Activated CD8-positive, alpha-beta T cell treated with anti-CD3 and anti-CD28 coated beads, Interleukin-2, amount 10 ng/mL, durations not matched to agents 7 days and 5 days (primary cell): ENCODE measurements at regions of chr6 and their contacts with region 1.

Region 1: GRCh38 chr6:42104095-42104806 is 38.2 kb downstream of the C6orf132 start:
- DNase-seq: peak; percentile 82
- ATAC-seq: peak; percentile 94
- H3K4me3 Mint-ChIP-seq: peak overlapping the region; percentile 65
- H3K27ac Mint-ChIP-seq: peak overlapping the region; percentile 74
- H3K4me1 Mint-ChIP-seq: peaks cover 30% of the 10 kb centered on the region
- H3K27me3 Mint-ChIP-seq: peaks cover 2% of the 10 kb centered on the region

Region 2: DNA sequence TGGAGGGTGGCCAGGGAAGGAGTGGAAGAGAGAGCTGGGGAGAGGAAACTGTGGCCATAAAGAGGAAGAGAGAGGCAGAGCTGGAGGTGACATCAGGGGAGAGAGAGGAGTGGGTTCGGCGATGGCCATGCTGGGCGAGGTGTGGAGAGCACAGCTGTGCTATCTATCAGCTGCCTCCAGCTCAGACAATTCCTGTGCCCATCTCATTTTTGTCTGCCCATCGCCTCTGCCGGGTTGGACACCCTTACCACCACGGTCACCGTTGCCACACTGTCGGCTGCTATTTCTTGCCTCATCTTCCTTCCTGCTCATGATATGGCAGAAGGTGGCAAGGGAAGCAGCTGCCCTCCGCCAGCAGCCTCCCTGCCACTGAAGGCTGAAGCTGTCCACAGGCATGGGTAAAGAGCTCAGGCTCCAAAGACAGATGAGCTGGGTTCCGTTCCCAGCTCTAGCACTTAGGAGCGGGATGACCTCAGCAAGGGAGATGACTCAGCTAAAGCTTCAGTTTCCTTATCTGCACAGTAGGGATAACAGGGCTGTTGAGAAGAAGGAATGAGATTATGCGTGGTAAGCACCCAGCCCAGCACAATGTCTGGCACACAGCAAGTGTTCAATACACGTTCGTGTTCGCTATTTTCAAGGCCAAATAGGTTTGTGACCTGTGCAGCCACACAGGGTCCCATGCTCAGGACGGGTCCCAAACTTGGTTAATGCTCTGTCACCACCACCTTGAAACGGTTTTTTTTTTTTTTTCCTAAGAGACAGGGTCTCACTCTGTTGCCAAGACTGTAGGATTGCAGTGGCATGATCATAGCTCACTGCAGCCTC is 75.8 kb before region 1 on chr6:
- CTCF ChIA-PET with region 1: no interaction called
- POLR2A ChIA-PET with region 1: no interaction called
- DNase-seq: no peak
- ATAC-seq: peak; percentile 29
- H3K4me3 Mint-ChIP-seq: peak overlapping the region; percentile 63
- H3K27ac Mint-ChIP-seq: peak overlapping the region; percentile 97
- H3K4me1 Mint-ChIP-seq: peaks cover 90% of the 10 kb centered on the region
- H3K27me3 Mint-ChIP-seq: no peaks in the 10 kb centered on the region

Region 3: DNA sequence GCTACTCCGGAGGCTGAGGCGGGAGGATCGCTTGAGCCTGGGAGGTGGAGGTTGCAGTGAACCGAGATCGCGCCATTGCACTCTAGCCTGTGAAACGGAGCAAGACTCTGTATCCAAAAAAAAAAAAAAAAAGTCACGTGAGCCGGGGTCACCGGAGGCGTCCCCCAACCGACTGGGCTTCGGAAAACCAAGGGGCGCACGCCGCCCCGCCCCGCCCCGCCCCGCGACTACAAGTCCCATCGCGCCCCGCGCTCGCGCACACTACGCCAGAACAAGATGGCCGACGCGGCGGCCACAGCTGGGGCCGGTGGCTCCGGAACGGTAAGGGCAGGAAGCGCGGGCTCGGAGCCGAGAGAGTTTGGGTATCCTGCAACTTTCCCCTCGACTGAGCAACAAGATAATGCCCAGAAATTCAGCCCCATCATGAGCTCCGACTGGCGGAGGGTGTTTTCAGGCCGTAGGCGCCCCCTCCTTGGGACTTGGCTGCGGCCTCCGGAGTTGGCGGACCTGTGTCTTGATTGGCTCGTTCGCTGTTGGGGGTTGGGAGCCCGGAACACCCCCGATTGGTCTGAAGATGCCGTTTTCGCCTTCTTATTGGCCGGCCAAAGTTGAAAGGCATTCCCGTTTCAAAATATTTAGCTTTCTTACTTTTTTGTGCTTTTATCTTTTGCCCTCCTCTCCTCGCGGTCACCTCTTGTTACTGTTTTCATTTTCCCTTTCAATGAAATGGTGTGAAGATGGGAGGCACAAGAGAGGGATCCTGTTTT is 53.8 kb before region 1 on chr6 and contains the start of gene TAF8:
- CTCF ChIA-PET with region 1: interaction called, 22 read pairs
- POLR2A ChIA-PET with region 1: interaction called, 6 read pairs
- DNase-seq: peak; percentile 95
- ATAC-seq: peak; percentile 81
- H3K4me3 Mint-ChIP-seq: peak within 1 kb of the TSS; percentile 95
- H3K27ac Mint-ChIP-seq: peak within 1 kb of the TSS; percentile 99
- H3K4me1 Mint-ChIP-seq: peaks cover 67% of the 10 kb centered on the region
- H3K27me3 Mint-ChIP-seq: no peaks in the 10 kb centered on the region
- total RNA-seq, gene TAF8: 44.1 TPM

Region 4: DNA sequence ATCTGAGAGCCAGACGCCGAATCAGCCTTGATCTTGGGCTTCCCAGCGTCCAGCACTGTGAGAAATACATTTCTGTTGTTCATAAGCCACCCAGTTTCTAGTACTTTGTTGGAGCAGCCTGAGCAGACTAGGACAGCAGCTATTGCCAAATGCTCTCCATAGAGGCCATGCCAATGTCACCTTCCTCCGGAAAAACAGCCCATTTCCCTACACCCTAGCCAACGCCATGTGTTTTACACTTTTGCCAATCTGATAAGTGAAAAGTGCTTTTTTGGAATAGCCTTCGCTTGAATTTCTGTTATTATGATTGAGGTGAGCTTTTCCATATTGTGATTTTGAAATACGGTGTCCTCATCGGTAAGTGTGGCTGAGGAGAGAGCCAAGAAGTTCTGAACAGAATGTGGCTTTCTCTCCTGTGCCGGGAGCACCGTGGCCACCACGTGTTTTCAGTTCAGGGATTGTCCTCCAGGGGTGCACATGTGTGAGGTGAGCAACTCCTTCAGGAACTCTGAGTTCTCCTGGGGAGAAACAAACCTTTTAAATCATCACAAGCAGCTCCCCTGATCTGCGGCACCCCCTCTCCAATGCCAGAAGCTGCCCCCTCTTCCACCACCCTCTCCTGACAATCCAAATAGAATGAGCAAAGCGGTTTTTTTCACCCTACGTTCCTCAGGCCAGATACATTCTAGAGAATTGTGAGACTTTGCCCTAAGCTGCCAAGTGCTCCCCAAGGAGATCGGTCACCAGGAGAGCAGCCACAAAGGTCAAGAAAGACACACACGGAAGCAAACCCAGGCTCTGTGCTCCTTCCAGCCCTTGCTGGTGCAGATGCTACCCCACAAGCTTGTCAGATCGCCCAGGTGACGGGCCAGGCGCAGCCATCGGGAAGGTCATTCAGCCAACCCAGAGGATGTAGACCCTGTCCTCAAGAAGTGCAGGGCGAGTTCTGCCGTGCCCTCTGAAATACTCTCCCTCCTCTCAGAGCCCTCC is 17.9 kb before region 1 on chr6:
- CTCF ChIA-PET with region 1: interaction called, 26 read pairs
- POLR2A ChIA-PET with region 1: interaction called, 5 read pairs
- DNase-seq: no peak
- ATAC-seq: no peak
- H3K4me3 Mint-ChIP-seq: no peak overlapping the region
- H3K27ac Mint-ChIP-seq: no peak overlapping the region
- H3K4me1 Mint-ChIP-seq: no peaks in the 10 kb centered on the region
- H3K27me3 Mint-ChIP-seq: no peaks in the 10 kb centered on the region

Region 5: GRCh38 chr6:42136508-42137193 is 32.4 kb after region 1 on chr6:
- CTCF ChIA-PET with region 1: interaction called, 12 read pairs
- POLR2A ChIA-PET with region 1: no interaction called
- DNase-seq: peak; percentile 37
- ATAC-seq: peak; percentile 66
- H3K4me3 Mint-ChIP-seq: no peak overlapping the region
- H3K27ac Mint-ChIP-seq: peak overlapping the region; percentile 3
- H3K4me1 Mint-ChIP-seq: peaks cover 5% of the 10 kb centered on the region
- H3K27me3 Mint-ChIP-seq: peaks cover 17% of the 10 kb centered on the region

Region 6: DNA sequence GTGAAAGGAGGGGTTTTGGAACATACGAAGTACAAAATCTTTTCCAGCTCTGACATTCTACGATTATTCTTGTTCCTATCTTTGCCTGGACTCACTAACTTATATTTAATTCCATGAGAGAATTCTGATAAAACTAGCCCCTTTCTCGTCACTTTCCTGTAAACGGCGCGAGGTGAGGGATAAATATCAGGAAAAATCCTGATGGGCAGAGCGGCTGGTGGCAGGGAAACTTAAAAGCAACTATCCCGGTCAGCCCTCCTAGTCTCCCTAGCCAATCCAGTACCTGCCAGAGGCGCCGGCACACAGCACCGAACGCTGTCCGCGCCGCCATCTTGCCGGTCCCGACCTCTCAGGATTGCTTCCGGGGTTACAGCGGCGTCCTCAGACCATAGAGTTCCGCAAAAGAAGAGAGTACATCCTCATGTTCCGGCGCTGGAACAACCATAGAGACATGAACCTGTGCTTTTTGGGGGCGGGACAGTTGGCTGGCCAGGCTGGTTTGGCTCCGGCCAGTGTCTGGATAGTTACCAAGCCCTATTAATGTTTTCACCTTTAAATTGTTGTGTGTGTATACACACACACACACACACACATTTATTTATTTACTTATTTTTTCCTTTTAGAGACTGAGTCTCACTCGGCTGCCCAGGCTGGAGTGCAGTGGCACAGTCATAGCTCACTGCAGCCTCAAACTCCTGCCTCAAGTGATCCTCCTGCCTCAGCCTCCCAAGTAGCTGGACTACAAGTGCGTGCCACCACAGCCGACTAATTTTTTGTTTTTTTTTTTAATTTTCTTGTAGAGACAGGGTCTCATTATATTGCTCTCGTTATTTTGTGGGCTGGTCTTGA is 113.5 kb after region 1 on chr6 and contains the start of gene MRPS10:
- CTCF ChIA-PET with region 1: interaction called, 21 read pairs
- POLR2A ChIA-PET with region 1: no interaction called
- DNase-seq: peak; percentile 95
- ATAC-seq: peak; percentile 99
- H3K4me3 Mint-ChIP-seq: peak within 1 kb of the TSS; percentile 100
- H3K27ac Mint-ChIP-seq: peak within 1 kb of the TSS; percentile 91
- H3K4me1 Mint-ChIP-seq: peaks cover 30% of the 10 kb centered on the region
- H3K27me3 Mint-ChIP-seq: no peaks in the 10 kb centered on the region
- total RNA-seq, gene MRPS10: 32.6 to 33.8 TPM